Mammary epithelial cell (primary cell): ENCODE measurements at regions of chr6 and their contacts with region 1.

Region 1: GRCh38 chr6:32885698-32886286 is 31.8 kb downstream of the PSMB9 start:
- DNase-seq: peak; percentile 45
- H3K4me3 ChIP-seq: no peak overlapping the region
- H3K27ac ChIP-seq: no peak overlapping the region
- H3K4me1 ChIP-seq: peaks cover 13% of the 10 kb centered on the region
- H3K27me3 ChIP-seq: no peaks in the 10 kb centered on the region
- CTCF ChIP-seq: peak; percentile 29 to 55

Region 2: GRCh38 chr6:32393665-32394420 is 491.9 kb before region 1 on chr6:
- CTCF ChIA-PET with region 1: no interaction called
- dilution Hi-C with region 1: no loop called
- in situ Hi-C with region 1: no loop called
- intact Hi-C with region 1: no loop called
- DNase-seq: peak; percentile 33
- H3K4me3 ChIP-seq: peak overlapping the region in 2 of 3 experiments; percentile 5 to 22
- H3K27ac ChIP-seq: peak overlapping the region; percentile 80
- H3K4me1 ChIP-seq: peaks cover 24% of the 10 kb centered on the region
- H3K27me3 ChIP-seq: no peaks in the 10 kb centered on the region
- CTCF ChIP-seq: no peak

Region 3: GRCh38 chr6:32829495-32829894 is 56.3 kb before region 1 on chr6:
- CTCF ChIA-PET with region 1: no interaction called
- dilution Hi-C with region 1: no loop called
- in situ Hi-C with region 1: no loop called
- intact Hi-C with region 1: no loop called
- DNase-seq: no peak
- H3K4me3 ChIP-seq: no peak overlapping the region
- H3K27ac ChIP-seq: no peak overlapping the region
- H3K4me1 ChIP-seq: peaks cover 9% of the 10 kb centered on the region
- H3K27me3 ChIP-seq: no peaks in the 10 kb centered on the region
- CTCF ChIP-seq: no peak

Region 4: GRCh38 chr6:32940656-32941213 is 54.9 kb after region 1 on chr6 and contains the start of gene HLA-DMB:
- CTCF ChIA-PET with region 1: no interaction called
- dilution Hi-C with region 1: no loop called
- in situ Hi-C with region 1: loop called in 1 of 2 experiments (anchors 5 kb)
- intact Hi-C with region 1: no loop called
- DNase-seq: peak; percentile 65
- H3K4me3 ChIP-seq: peak within 1 kb of the TSS in 2 of 3 experiments; percentile 4 to 29
- H3K27ac ChIP-seq: no peak within 1 kb of the TSS
- H3K4me1 ChIP-seq: no peaks in the 10 kb centered on the region
- H3K27me3 ChIP-seq: no peaks in the 10 kb centered on the region
- CTCF ChIP-seq: no peak
- total RNA-seq, gene HLA-DMB: not detected

Region 5: GRCh38 chr6:32947552-32948465 is 62.0 kb after region 1 on chr6:
- CTCF ChIA-PET with region 1: interaction called, 5 read pairs
- dilution Hi-C with region 1: no loop called
- in situ Hi-C with region 1: no loop called
- intact Hi-C with region 1: loop called (anchors 1 kb)
- DNase-seq: peak; percentile 51
- H3K4me3 ChIP-seq: no peak overlapping the region
- H3K27ac ChIP-seq: no peak overlapping the region
- H3K4me1 ChIP-seq: peaks cover 4% of the 10 kb centered on the region
- H3K27me3 ChIP-seq: no peaks in the 10 kb centered on the region
- CTCF ChIP-seq: peak; percentile 63 to 80

Region 6: GRCh38 chr6:32971581-32972352 is 86.0 kb after region 1 on chr6:
- CTCF ChIA-PET with region 1: no interaction called
- dilution Hi-C with region 1: no loop called
- in situ Hi-C with region 1: loop called in 1 of 2 experiments (anchors 25 kb)
- intact Hi-C with region 1: loop called (anchors 5 kb)
- DNase-seq: peak; percentile 100
- H3K4me3 ChIP-seq: peak overlapping the region; percentile 83 to 90 (median 89)
- H3K27ac ChIP-seq: peak overlapping the region; percentile 99
- H3K4me1 ChIP-seq: peaks cover 24% of the 10 kb centered on the region
- H3K27me3 ChIP-seq: no peaks in the 10 kb centered on the region
- CTCF ChIP-seq: no peak

Region 7: GRCh38 chr6:33082702-33083101 is 196.9 kb after region 1 on chr6:
- CTCF ChIA-PET with region 1: no interaction called
- dilution Hi-C with region 1: no loop called
- in situ Hi-C with region 1: no loop called
- intact Hi-C with region 1: loop called (anchors 10 kb)
- DNase-seq: no peak
- H3K4me3 ChIP-seq: no peak overlapping the region
- H3K27ac ChIP-seq: no peak overlapping the region
- H3K4me1 ChIP-seq: peaks cover 9% of the 10 kb centered on the region
- H3K27me3 ChIP-seq: no peaks in the 10 kb centered on the region
- CTCF ChIP-seq: peak; percentile 3 to 24